Activated T-helper 2 cell treated with anti-CD3 and anti-CD28 coated beads, Interferon-gamma antibody, Interleukin-2, Interleukin-4, amounts not matched to agents 10 μg/mL and 5 μg/mL and 100 μg/mL, durations not matched to agents 14 hours and 24 hours and 36 hours (primary cell): ENCODE measurements at regions of chr1 and their contacts with region 1.

Region 1: DNA sequence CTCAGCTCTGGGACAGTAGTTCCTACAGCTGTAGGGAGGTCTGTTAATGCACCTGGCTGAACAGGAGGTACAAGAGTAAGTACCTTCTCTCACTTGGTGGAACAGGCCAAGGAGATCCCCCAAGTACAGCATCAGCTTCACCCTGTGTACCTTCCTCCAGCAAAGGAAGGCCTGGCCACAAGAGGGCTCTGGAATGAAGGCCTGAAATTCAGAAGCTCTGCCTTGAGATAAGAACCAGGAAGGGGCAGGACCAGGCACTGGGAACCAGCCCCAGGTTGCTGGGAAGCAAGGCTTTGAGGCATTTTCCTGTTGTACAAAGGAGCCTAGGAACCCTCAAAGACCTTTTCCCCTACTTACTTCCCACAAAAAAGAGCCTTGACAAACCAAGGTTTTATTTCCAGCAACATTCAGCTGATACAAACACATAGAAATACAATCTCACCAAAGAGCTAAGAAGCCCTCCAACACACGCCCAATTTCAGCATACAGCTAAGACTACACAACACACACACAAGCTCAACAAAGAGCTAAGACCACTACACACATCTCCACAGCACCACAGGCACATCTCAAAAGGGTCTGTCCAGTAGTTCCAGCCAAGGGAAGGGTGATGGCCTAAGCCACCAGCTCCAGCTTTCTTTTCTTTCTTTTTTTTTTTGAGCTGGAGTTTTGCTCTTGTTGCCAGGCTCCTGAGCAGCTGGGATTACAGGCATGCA is 23.5 kb downstream of the F11R start:
- DNase-seq: no peak
- H3K4me3 Mint-ChIP-seq: no peak overlapping the region
- H3K27ac Mint-ChIP-seq: peak overlapping the region; percentile 8
- H3K4me1 Mint-ChIP-seq: peaks cover 19% of the 10 kb centered on the region
- H3K27me3 Mint-ChIP-seq: no peaks in the 10 kb centered on the region

Region 2: DNA sequence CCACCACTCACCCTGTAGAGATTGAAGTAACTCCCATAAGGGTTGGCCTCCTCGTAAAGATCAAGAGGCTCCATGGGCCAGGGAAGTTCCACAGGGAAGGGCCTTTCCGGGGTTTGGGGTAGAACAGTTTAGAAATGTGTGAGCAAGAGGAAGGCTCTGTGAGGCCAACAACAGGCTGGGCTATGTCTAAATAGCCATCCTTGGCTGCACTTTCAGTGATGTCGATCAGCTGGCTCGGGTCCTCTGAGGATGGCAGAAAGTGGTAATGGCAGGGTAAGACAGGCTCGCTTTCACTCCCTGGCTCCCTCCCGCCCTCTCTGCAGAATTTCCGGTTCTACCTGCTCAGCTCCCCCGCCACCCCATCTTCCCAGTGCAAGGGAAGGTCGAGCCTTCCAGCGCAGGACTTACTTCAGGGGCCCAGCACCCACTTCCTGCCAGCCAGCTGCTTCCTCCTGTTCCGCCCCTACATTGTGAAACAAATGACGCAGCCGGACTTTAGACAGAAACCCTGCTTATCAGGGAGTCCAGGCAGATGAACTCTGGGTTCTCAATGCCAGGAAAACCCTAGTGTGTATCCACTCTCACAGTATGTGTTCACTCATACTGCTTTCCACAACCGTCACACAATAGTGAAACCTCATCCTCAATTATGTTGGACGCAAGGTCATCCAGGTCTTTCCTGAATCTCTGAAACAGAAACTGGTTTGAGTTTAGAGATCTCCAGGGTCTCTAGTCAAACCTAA is 16.2 kb after region 1 on chr1:
- intact Hi-C with region 1: loop called (anchors 2 kb)
- DNase-seq: peak; percentile 62
- H3K4me3 Mint-ChIP-seq: peak overlapping the region; percentile 74
- H3K27ac Mint-ChIP-seq: peak overlapping the region; percentile 96
- H3K4me1 Mint-ChIP-seq: peaks cover 37% of the 10 kb centered on the region
- H3K27me3 Mint-ChIP-seq: no peaks in the 10 kb centered on the region

Region 3: DNA sequence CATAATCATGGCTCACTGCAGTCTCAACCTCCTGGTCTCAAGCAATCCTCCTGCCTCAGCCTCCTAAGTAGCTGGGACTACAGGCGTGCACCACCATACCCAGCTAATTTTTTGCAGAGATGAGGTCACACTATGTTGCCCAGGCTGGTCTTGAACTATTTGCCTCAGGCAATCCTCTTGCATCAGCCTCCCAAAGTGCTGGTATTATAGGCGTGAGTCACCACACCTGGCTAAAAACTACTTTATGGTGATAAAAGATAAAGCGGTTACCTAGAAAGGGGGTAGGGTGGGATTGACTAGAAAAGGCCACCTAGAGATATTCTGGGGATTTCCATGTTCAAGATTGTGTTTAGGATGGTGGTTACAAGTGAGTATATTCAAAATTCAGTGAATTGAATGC is 36.3 kb after region 1 on chr1:
- intact Hi-C with region 1: loop called (anchors 5 kb)
- DNase-seq: no peak
- H3K4me3 Mint-ChIP-seq: no peak overlapping the region
- H3K27ac Mint-ChIP-seq: no peak overlapping the region
- H3K4me1 Mint-ChIP-seq: peaks cover 27% of the 10 kb centered on the region
- H3K27me3 Mint-ChIP-seq: no peaks in the 10 kb centered on the region

Region 4: DNA sequence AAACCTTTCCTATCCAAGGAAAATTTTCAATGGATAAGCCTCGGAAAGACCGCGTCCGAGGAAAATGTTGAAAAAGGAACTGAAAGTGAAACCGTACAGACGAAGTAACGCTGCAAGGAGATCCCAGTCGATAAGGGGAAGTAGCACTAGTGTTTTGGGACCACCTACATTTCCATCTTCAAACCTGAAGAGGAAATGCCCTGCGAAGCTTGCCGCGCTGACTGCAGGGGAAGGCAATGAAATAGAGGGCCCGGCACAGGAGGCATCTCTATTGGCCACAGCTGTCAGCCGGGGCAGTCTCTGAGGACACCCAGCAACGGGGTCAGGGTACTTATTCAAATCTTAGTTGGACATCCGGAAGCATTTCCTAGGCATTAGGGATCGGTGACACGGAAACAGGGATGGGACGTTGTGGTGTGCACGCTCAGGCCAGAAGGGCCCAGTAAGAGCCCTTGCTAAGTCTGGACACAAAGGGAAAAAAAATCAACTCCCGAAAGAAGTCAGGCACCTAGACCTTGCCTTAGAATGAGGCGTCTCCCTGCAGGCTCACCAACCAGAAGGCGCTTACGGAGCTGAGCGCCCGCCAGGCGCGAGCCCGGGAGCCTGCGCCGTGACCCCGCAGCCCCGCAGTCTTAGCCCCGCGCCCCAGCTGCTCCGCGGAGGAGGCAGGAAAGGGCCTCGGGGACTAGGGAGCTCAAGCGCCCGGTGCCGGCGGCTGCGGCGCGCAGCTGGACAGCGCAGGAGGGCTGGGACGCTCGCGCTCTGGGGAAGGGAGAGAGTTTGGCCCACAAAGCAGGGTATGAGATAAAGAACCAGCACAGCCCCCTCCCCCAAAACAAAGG is 47.6 kb after region 1 on chr1:
- intact Hi-C with region 1: no loop called
- DNase-seq: peak; percentile 71
- H3K4me3 Mint-ChIP-seq: peak overlapping the region; percentile 95
- H3K27ac Mint-ChIP-seq: peak overlapping the region; percentile 100
- H3K4me1 Mint-ChIP-seq: peaks cover 33% of the 10 kb centered on the region
- H3K27me3 Mint-ChIP-seq: no peaks in the 10 kb centered on the region

Region 5: DNA sequence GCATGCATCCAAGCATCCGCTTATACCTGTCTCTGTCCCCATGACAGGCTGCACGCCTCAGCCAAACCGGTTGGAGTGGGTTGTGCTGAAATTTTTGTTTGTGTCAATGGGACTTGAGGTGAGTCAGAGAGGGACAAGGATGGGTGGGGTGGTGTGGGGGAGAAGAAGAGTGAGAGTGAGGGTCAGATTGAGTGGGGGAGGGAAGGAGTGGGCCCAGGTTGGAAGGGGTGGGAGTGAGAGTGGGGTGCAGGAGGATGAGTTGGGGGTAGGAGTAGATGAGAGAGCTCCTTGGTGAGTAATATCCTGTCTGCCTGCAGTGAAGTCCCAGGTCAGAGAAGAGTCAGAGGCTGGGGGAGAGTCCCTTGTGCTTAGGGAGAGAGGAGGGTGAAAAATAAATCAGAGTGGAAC is 95.1 kb after region 1 on chr1:
- intact Hi-C with region 1: loop called (anchors 2 kb)
- DNase-seq: no peak
- H3K4me3 Mint-ChIP-seq: no peak overlapping the region
- H3K27ac Mint-ChIP-seq: peak overlapping the region; percentile 57
- H3K4me1 Mint-ChIP-seq: peaks cover 54% of the 10 kb centered on the region
- H3K27me3 Mint-ChIP-seq: no peaks in the 10 kb centered on the region